ENCODE measurements at regions of chr10 and their contacts with region 1.

Region 1: GRCh38 chr10:126504063-126504739 is 115.9 kb upstream of the ADAM12 start:
- DNase-seq: peak; percentile 52
- ATAC-seq: no peak
- H3K4me3 ChIP-seq: no peak overlapping the region
- H3K4me3 Mint-ChIP-seq: no peak overlapping the region
- H3K27ac ChIP-seq: no peak overlapping the region
- H3K27ac Mint-ChIP-seq: no peak overlapping the region
- H3K4me1 ChIP-seq: no peaks in the 10 kb centered on the region
- H3K4me1 Mint-ChIP-seq: no peaks in the 10 kb centered on the region
- H3K27me3 ChIP-seq: no peaks in the 10 kb centered on the region
- H3K27me3 Mint-ChIP-seq: no peaks in the 10 kb centered on the region
- CTCF ChIP-seq: peak; percentile 45

Region 2: DNA sequence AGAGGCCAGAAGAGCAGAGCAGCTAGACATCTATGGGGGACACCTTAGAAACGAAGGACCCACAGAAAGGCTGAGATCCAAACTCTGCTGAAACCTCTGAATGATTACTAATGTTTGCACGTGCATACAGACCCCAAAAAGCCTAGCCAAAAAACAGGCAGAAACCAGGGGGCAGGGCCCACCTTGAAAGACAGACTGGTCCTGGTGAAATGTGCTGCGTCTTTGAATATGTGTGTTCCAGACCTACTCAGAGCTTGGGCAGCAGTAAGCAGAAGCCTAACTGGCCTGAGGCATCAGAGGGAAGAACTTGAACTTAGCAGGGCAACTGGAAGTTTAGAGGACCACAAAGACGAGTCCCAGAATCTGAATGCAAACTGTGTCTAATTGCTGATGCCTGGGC is 1073.1 kb before region 1 on chr10:
- CTCF ChIA-PET with region 1: no interaction called
- POLR2A ChIA-PET with region 1: no interaction called
- intact Hi-C with region 1: no loop called
- DNase-seq: no peak
- ATAC-seq: no peak
- H3K4me3 ChIP-seq: no peak overlapping the region
- H3K4me3 Mint-ChIP-seq: no peak overlapping the region
- H3K27ac ChIP-seq: no peak overlapping the region
- H3K27ac Mint-ChIP-seq: no peak overlapping the region
- H3K4me1 ChIP-seq: no peaks in the 10 kb centered on the region
- H3K4me1 Mint-ChIP-seq: no peaks in the 10 kb centered on the region
- H3K27me3 ChIP-seq: no peaks in the 10 kb centered on the region
- H3K27me3 Mint-ChIP-seq: peaks cover 8% of the 10 kb centered on the region
- CTCF ChIP-seq: no peak

Region 3: GRCh38 chr10:125936331-125936730 is 567.9 kb before region 1 on chr10:
- CTCF ChIA-PET with region 1: interaction called, 17 read pairs
- POLR2A ChIA-PET with region 1: no interaction called
- intact Hi-C with region 1: no loop called
- DNase-seq: no peak
- ATAC-seq: no peak
- H3K4me3 ChIP-seq: no peak overlapping the region
- H3K4me3 Mint-ChIP-seq: no peak overlapping the region
- H3K27ac ChIP-seq: no peak overlapping the region
- H3K27ac Mint-ChIP-seq: no peak overlapping the region
- H3K4me1 ChIP-seq: no peaks in the 10 kb centered on the region
- H3K4me1 Mint-ChIP-seq: no peaks in the 10 kb centered on the region
- H3K27me3 ChIP-seq: peaks cover 0 to 6% (median 3%) of the 10 kb centered on the region in 4 experiments
- H3K27me3 Mint-ChIP-seq: peaks cover 54% of the 10 kb centered on the region
- CTCF ChIP-seq: no peak

Region 4: GRCh38 chr10:125976960-125977603 is 527.1 kb before region 1 on chr10:
- CTCF ChIA-PET with region 1: interaction called, 80 read pairs
- POLR2A ChIA-PET with region 1: no interaction called
- intact Hi-C with region 1: no loop called
- DNase-seq: no peak
- ATAC-seq: no peak
- H3K4me3 ChIP-seq: no peak overlapping the region
- H3K4me3 Mint-ChIP-seq: no peak overlapping the region
- H3K27ac ChIP-seq: no peak overlapping the region
- H3K27ac Mint-ChIP-seq: no peak overlapping the region
- H3K4me1 ChIP-seq: no peaks in the 10 kb centered on the region
- H3K4me1 Mint-ChIP-seq: peaks cover under 1% of the 10 kb centered on the region
- H3K27me3 ChIP-seq: peaks cover 0 to 2% (median 0%) of the 10 kb centered on the region in 4 experiments
- H3K27me3 Mint-ChIP-seq: peaks cover 26% of the 10 kb centered on the region
- CTCF ChIP-seq: no peak

Region 5: GRCh38 chr10:126352454-126352853 is 151.7 kb before region 1 on chr10:
- CTCF ChIA-PET with region 1: no interaction called
- POLR2A ChIA-PET with region 1: no interaction called
- intact Hi-C with region 1: no loop called
- DNase-seq: no peak
- ATAC-seq: no peak
- H3K4me3 ChIP-seq: no peak overlapping the region
- H3K4me3 Mint-ChIP-seq: no peak overlapping the region
- H3K27ac ChIP-seq: no peak overlapping the region
- H3K27ac Mint-ChIP-seq: no peak overlapping the region
- H3K4me1 ChIP-seq: no peaks in the 10 kb centered on the region
- H3K4me1 Mint-ChIP-seq: no peaks in the 10 kb centered on the region
- H3K27me3 ChIP-seq: peaks cover 0 to 3% (median 0%) of the 10 kb centered on the region in 4 experiments
- H3K27me3 Mint-ChIP-seq: peaks cover 8% of the 10 kb centered on the region
- CTCF ChIP-seq: no peak

Region 6: GRCh38 chr10:126770809-126771208 is 266.6 kb after region 1 on chr10:
- CTCF ChIA-PET with region 1: no interaction called
- POLR2A ChIA-PET with region 1: no interaction called
- intact Hi-C with region 1: no loop called
- DNase-seq: no peak
- ATAC-seq: no peak
- H3K4me3 ChIP-seq: no peak overlapping the region
- H3K4me3 Mint-ChIP-seq: no peak overlapping the region
- H3K27ac ChIP-seq: no peak overlapping the region
- H3K27ac Mint-ChIP-seq: no peak overlapping the region
- H3K4me1 ChIP-seq: no peaks in the 10 kb centered on the region
- H3K4me1 Mint-ChIP-seq: no peaks in the 10 kb centered on the region
- H3K27me3 ChIP-seq: no peaks in the 10 kb centered on the region
- H3K27me3 Mint-ChIP-seq: peaks cover 3% of the 10 kb centered on the region
- CTCF ChIP-seq: no peak